GM18951 (cell line): ENCODE measurements at regions of chr12 and their contacts with region 1.

Region 1: DNA sequence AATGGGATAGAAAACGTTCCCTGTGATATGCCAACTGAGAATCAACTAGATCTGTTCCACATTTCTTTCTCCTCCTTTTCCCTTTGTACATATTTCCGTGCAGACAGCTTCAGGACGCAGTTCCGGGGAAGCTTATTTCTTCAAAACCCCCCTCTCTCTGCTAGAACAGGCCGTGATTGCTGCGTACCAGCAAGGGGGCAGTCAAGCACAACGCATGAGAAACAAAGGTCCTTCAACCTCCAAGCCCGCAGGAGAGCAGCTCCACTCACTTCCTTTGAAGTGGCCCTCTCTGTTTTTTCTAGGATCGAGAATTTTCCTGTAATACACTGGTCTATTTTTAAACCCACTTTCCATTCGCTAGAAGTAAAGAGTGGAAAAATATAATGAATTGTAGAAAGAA is 80.8 kb downstream of the ZNF664 start:
- POLR2A ChIP-seq: no peak

Region 2: DNA sequence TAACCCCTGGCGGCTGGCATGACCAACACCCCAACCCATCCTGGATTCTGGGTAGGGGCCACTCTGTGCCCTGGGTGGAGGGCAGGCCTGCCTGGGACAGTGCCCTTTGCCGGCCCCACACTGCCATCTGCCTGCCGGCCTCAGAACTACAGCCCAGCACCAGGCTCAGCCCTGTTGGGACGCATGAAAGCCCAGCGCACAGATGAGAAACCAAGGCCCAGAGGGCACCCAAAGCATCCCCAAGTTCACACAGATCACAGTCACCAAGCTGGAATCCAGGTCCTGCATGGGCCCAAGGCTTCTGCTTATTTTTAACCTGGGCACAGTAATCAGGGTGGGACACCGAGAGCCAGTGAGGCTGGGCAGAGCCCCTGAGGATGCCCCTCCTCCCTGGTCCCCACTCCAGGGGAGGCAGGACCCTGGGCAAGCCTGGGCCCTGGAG is 267.2 kb after region 1 on chr12:
- in situ Hi-C with region 1: loop called (anchors 25 kb)
- POLR2A ChIP-seq: no peak